ENCODE measurements at regions of chr11 and their contacts with region 1.

Region 1: DNA sequence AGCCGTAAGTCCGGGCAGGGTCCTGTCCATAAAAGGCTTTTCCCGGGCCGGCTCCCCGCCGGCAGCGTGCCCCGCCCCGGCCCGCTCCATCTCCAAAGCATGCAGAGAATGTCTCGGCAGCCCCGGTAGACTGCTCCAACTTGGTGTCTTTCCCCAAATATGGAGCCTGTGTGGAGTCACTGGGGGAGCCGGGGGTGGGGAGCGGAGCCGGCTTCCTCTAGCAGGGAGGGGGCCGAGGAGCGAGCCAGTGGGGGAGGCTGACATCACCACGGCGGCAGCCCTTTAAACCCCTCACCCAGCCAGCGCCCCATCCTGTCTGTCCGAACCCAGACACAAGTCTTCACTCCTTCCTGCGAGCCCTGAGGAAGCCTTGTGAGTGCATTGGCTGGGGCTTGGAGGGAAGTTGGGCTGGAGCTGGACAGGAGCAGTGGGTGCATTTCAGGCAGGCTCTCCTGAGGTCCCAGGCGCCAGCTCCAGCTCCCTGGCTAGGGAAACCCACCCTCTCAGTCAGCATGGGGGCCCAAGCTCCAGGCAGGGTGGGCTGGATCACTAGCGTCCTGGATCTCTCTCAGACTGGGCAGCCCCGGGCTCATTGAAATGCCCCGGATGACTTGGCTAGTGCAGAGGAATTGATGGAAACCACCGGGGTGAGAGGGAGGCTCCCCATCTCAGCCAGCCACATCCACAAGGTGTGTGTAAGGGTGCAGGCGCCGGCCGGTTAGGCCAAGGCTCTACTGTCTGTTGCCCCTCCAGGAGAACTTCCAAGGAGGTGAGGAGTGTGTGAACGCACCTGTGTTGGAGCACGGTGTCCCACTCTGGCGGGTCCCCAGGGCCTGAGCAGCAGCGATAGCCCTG is at the start of gene TAGLN:
- DNase-seq: peak; percentile 87 to 99
- H3K4me3 ChIP-seq: peak within 1 kb of the TSS; percentile 68 to 97
- H3K27ac ChIP-seq: peak within 1 kb of the TSS; percentile 96 to 98
- H3K4me1 ChIP-seq: peaks cover 7 to 9% of the 10 kb centered on the region in 2 donors
- H3K27me3 ChIP-seq: no peaks in the 10 kb centered on the region
- CTCF ChIP-seq: no peak
- total RNA-seq, gene TAGLN: 6,542 TPM

Region 2: GRCh38 chr11:117045196-117045595 is 154.1 kb before region 1 on chr11:
- intact Hi-C with region 1: no loop called
- DNase-seq: no peak
- H3K4me3 ChIP-seq: no peak overlapping the region
- H3K27ac ChIP-seq: no peak overlapping the region
- H3K4me1 ChIP-seq: peaks cover 0 to 8% of the 10 kb centered on the region in 2 donors
- H3K27me3 ChIP-seq: no peaks in the 10 kb centered on the region
- CTCF ChIP-seq: no peak

Region 3: GRCh38 chr11:117220999-117221774 is 21.9 kb after region 1 on chr11:
- intact Hi-C with region 1: loop called (anchors 1 kb)
- DNase-seq: no peak
- H3K4me3 ChIP-seq: peak overlapping the region; percentile 3 to 46
- H3K27ac ChIP-seq: peak overlapping the region; percentile 90 to 94
- H3K4me1 ChIP-seq: peaks cover 35 to 53% of the 10 kb centered on the region in 2 donors
- H3K27me3 ChIP-seq: no peaks in the 10 kb centered on the region
- CTCF ChIP-seq: no peak

Region 4: GRCh38 chr11:117226388-117227385 is 27.4 kb after region 1 on chr11:
- intact Hi-C with region 1: loop called (anchors 1 kb)
- DNase-seq: peak in 1 of 2 donors; percentile 71
- H3K4me3 ChIP-seq: no peak overlapping the region
- H3K27ac ChIP-seq: peak overlapping the region in 1 of 2 donors; percentile 16
- H3K4me1 ChIP-seq: peaks cover 7 to 19% of the 10 kb centered on the region in 2 donors
- H3K27me3 ChIP-seq: no peaks in the 10 kb centered on the region
- CTCF ChIP-seq: peak; percentile 71 to 87 (median 83)